ENCODE measurements at regions of chr2 and their contacts with region 1.

Region 1: GRCh38 chr2:203650860-203651613 is 55.4 kb upstream of the CD28 start:
- DNase-seq: no peak
- H3K4me3 ChIP-seq: no peak overlapping the region
- H3K27ac ChIP-seq: peak overlapping the region; percentile 75
- H3K4me1 ChIP-seq: peaks cover 40% of the 10 kb centered on the region
- H3K27me3 ChIP-seq: no peaks in the 10 kb centered on the region
- CTCF ChIP-seq: peak; percentile 56

Region 2: DNA sequence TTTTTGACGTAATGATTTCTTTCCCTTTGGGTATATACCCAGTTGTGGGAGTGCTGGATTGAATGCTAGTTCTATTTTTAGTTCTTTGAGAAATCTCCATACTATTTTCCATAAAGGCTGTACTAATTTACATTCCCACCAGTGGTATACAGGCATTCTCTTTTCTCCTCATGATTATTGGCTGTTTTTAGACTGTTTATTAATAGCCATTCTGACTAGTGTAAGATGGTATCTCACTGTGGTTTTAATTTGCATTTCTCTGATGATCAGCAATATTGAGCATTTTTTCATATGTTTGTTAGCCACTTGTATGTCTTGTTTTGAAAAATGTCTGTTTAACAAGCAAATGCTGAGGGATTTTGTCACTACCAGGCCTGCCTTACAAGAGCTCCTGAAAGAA is 46.2 kb after region 1 on chr2:
- intact Hi-C with region 1: no loop called
- DNase-seq: no peak
- H3K4me3 ChIP-seq: no peak overlapping the region
- H3K27ac ChIP-seq: no peak overlapping the region
- H3K4me1 ChIP-seq: peaks cover 17% of the 10 kb centered on the region
- H3K27me3 ChIP-seq: no peaks in the 10 kb centered on the region
- CTCF ChIP-seq: no peak

Region 3: GRCh38 chr2:203804070-203804469 is 153.0 kb after region 1 on chr2:
- intact Hi-C with region 1: loop called (anchors 10 kb)
- DNase-seq: no peak
- H3K4me3 ChIP-seq: no peak overlapping the region
- H3K27ac ChIP-seq: peak overlapping the region; percentile 49
- H3K4me1 ChIP-seq: peaks cover 4% of the 10 kb centered on the region
- H3K27me3 ChIP-seq: no peaks in the 10 kb centered on the region
- CTCF ChIP-seq: no peak

Measured in left ventricle myocardium inferior (tissue), 1 donor.